CD4-positive, alpha-beta memory T cell (primary cell): ENCODE measurements at regions of chr5 and their contacts with region 1.

Region 1: DNA sequence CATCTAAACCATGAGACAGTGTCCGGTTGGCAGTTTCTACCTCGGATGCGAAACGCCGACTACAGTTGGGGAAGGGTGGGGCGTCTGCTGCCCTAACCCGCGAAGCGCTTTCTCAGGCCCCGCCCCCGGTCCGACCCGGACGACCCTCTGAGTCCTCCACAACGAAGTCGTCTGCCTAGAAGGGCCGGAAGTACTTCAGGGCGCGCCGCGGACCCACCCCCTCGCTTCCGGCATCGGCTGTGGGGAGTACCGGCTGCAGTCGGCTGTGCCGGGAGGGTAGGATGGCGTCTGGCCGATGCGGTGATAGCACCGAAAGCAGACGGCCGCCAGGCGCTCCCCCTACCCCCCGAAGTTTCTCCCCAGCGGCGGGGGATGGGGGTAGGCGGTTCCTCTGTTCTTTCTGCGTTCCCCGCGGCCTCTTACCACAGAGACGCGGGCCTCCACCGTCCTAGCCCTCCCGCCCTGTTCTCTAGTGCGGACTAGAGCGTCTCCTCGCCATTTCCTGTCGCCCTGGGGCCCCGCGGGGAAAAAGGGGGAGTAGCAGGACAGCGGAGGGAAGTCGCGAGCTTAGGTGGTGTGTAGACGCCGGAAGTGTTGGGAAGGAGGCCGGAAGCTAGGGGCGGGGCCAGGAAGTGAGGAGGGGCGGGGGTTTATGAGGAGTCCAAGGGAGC is at the start of gene TRIM41:
- DNase-seq: peak; percentile 97 to 98 (median 97)
- H3K4me3 ChIP-seq: peak within 1 kb of the TSS; percentile 62 to 90
- H3K4me3 Mint-ChIP-seq: peak within 1 kb of the TSS; percentile 90 to 99 (median 97)
- H3K27ac ChIP-seq: peak within 1 kb of the TSS; percentile 97
- H3K27ac Mint-ChIP-seq: peak within 1 kb of the TSS; percentile 98 to 100 (median 99)
- H3K4me1 ChIP-seq: peaks cover 52% of the 10 kb centered on the region
- H3K4me1 Mint-ChIP-seq: peaks cover 32 to 75% (median 52%) of the 10 kb centered on the region in 4 donors
- H3K27me3 ChIP-seq: no peaks in the 10 kb centered on the region
- H3K27me3 Mint-ChIP-seq: peaks cover 0 to 18% of the 10 kb centered on the region in 2 donors
- total RNA-seq, gene TRIM41: 39.9 to 40.7 TPM

Region 2: GRCh38 chr5:180860887-180861822 is 362.0 kb before region 1 on chr5 and contains the start of gene ZFP62:
- CTCF ChIA-PET with region 1: interaction called, 3 read pairs
- POLR2A ChIA-PET with region 1: no interaction called
- intact Hi-C with region 1: loop called (anchors 2 kb)
- DNase-seq: peak; percentile 86 to 89 (median 86)
- H3K4me3 ChIP-seq: peak within 1 kb of the TSS; percentile 36 to 96
- H3K4me3 Mint-ChIP-seq: peak within 1 kb of the TSS; percentile 90 to 95 (median 92)
- H3K27ac ChIP-seq: peak within 1 kb of the TSS; percentile 67
- H3K27ac Mint-ChIP-seq: peak within 1 kb of the TSS; percentile 96 to 98 (median 97)
- H3K4me1 ChIP-seq: peaks cover 9% of the 10 kb centered on the region
- H3K4me1 Mint-ChIP-seq: peaks cover 13 to 31% (median 19%) of the 10 kb centered on the region in 4 donors
- H3K27me3 ChIP-seq: no peaks in the 10 kb centered on the region
- H3K27me3 Mint-ChIP-seq: peaks cover 0 to 2% of the 10 kb centered on the region in 2 donors
- total RNA-seq, gene ZFP62: 71.1 to 71.7 TPM

Region 3: DNA sequence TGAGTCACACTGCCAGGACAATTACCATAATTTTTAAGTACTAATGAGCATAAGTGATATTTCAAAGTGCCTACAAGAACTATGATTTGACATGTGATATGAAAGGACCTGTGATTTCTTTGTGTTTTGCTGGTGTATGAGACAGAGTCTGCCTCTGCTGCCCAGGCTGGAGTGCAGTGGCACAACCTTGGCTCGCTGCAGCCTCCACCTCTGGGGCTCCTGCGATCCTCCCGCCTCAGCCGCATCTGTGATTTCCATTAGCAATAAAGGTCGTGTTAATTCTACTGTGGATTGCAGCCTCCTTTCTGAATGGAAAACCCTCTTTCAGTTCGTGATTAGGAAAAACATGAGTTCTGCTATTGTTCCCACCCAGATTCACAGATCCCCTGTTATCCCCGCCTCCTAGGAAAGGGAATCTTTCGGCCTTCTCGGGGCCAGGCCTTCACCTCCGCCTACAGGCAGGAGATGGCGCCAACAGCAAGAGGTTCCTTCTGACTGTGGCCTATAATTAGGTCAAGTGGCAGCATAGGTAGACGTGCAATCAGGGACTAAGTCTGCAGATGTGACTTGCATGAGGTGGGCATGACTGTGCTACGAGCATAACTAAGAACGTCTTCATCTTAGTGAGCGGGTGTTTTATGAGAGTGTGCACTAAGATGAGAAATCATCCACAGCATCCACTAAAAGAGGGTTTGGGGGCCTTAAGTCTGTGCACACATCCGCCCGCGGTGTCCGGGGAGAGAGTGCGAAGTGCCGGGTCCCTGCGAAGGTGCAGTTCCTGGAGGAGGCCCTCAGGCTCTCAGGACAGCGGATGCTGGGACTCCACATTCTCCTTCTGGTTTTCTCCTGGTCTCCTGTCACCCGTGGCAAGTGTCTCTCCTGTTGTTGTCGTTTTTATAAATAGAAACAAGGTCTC is 41.3 kb before region 1 on chr5:
- CTCF ChIA-PET with region 1: interaction called, 10 read pairs
- POLR2A ChIA-PET with region 1: interaction called, 375 read pairs
- intact Hi-C with region 1: loop called (anchors 1 kb)
- DNase-seq: peak; percentile 65 to 78 (median 76)
- H3K4me3 ChIP-seq: no peak overlapping the region
- H3K4me3 Mint-ChIP-seq: peak overlapping the region; percentile 26 to 94 (median 84)
- H3K27ac ChIP-seq: no peak overlapping the region
- H3K27ac Mint-ChIP-seq: peak overlapping the region; percentile 48 to 95 (median 88)
- H3K4me1 ChIP-seq: peaks cover 14% of the 10 kb centered on the region
- H3K4me1 Mint-ChIP-seq: peaks cover 11 to 42% (median 22%) of the 10 kb centered on the region in 4 donors
- H3K27me3 ChIP-seq: no peaks in the 10 kb centered on the region
- H3K27me3 Mint-ChIP-seq: peaks cover 0 to 2% of the 10 kb centered on the region in 2 donors

Region 4: DNA sequence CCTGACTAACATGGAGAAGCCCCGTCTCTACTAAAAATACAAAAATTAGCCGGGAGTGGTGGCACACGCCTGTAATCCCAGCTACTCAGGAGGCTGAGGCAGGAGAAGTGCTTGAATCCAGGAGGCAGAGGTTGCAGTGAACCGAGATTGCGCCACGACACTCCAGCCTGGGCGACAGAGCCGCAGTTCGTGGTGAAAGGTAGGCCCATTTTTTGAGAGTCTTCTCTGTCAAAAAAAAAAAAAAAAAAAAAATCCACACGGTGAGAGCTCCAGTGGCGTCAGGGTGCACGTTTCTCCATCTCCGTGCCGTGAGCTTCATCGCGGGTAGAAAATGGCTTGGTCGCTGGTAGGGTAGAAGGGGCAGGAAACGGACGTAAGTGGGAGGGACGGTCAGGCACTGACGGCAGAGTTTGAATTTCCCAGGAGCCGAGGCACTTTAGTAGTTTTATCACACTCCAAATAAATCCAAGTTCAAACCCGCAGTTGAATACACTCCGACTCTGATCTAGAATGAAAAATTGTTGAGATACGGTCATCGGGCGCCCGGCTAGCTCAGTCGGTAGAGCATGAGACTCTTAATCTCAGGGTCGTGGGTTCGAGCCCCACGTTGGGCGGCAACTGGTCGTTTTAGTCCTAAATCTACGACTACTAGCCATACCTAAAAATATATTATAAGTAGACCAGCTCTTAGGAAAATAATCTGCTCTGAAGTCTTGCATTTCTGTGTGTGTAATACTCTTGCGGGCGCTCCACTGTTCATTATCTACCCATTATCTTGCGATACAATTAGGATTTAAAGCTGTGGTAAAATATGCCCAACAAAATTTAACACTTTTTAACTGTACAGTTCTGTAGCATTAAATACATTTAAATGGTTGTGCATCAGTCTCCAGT is 15.7 kb before region 1 on chr5:
- CTCF ChIA-PET with region 1: interaction called, 14 read pairs
- POLR2A ChIA-PET with region 1: interaction called, 131 read pairs
- intact Hi-C with region 1: loop called (anchors 1 kb)
- DNase-seq: peak; percentile 76 to 88 (median 81)
- H3K4me3 ChIP-seq: peak overlapping the region; percentile 71
- H3K4me3 Mint-ChIP-seq: peak overlapping the region; percentile 88 to 97 (median 92)
- H3K27ac ChIP-seq: peak overlapping the region; percentile 67
- H3K27ac Mint-ChIP-seq: peak overlapping the region; percentile 91 to 100 (median 98)
- H3K4me1 ChIP-seq: peaks cover 31% of the 10 kb centered on the region
- H3K4me1 Mint-ChIP-seq: peaks cover 24 to 47% (median 32%) of the 10 kb centered on the region in 4 donors
- H3K27me3 ChIP-seq: no peaks in the 10 kb centered on the region
- H3K27me3 Mint-ChIP-seq: peaks cover 7 to 10% of the 10 kb centered on the region in 2 donors

Region 5: GRCh38 chr5:181271081-181271480 is 47.9 kb after region 1 on chr5:
- CTCF ChIA-PET with region 1: no interaction called
- POLR2A ChIA-PET with region 1: no interaction called
- intact Hi-C with region 1: no loop called
- DNase-seq: no peak
- H3K4me3 ChIP-seq: no peak overlapping the region
- H3K4me3 Mint-ChIP-seq: no peak overlapping the region
- H3K27ac ChIP-seq: no peak overlapping the region
- H3K27ac Mint-ChIP-seq: no peak overlapping the region
- H3K4me1 ChIP-seq: no peaks in the 10 kb centered on the region
- H3K4me1 Mint-ChIP-seq: no peaks in the 10 kb centered on the region
- H3K27me3 ChIP-seq: no peaks in the 10 kb centered on the region
- H3K27me3 Mint-ChIP-seq: no peaks in the 10 kb centered on the region